Activated naive CD4-positive, alpha-beta T cell treated with anti-CD3 and anti-CD28 coated beads, Interleukin-2, amount 10 ng/mL, durations not matched to agents 7 days and 5 days (primary cell): ENCODE measurements at regions of chr17 and their contacts with region 1.

Region 1: DNA sequence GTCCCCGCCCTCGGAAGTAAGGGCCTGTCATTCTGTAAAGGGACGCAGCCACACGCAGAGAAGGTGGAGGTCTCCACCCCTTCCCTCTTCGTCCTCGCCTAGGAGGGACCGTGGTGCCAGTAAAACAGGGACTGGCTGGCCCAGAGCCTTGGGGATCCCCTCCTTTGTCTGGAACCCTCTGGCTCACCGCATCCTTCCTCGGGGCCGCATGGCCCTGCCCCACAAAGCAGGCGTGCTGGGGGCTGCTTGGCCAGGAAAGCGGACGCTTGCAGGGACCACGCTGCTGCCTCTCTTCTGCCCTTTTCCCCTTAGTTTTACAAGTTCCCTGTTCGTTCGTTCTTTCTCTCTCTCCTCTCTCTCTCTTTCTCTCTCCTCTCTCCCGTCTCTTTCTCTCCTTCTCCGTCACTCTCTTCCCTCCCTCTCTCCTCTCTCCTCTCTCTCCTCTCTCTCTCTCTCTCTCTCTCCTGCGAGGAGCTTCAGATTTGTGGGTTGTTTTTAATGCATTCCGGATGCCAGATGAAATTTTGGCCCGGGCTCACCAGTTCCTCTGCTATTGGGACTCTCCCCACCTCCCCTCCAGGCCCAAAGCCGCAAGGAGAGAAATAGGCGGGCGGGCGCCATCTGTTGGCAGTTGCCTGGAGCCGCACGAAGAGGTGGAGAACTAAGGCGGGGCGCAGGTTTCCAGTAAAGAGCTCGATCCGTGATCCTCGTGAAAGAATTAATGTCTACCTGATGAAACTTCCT is 35.1 kb upstream of the CDRT4 start:
- DNase-seq: peak; percentile 78
- H3K4me3 Mint-ChIP-seq: no peak overlapping the region
- H3K27ac Mint-ChIP-seq: peak overlapping the region; percentile 17
- H3K4me1 Mint-ChIP-seq: peaks cover 5% of the 10 kb centered on the region
- H3K27me3 Mint-ChIP-seq: peaks cover 4% of the 10 kb centered on the region

Region 2: DNA sequence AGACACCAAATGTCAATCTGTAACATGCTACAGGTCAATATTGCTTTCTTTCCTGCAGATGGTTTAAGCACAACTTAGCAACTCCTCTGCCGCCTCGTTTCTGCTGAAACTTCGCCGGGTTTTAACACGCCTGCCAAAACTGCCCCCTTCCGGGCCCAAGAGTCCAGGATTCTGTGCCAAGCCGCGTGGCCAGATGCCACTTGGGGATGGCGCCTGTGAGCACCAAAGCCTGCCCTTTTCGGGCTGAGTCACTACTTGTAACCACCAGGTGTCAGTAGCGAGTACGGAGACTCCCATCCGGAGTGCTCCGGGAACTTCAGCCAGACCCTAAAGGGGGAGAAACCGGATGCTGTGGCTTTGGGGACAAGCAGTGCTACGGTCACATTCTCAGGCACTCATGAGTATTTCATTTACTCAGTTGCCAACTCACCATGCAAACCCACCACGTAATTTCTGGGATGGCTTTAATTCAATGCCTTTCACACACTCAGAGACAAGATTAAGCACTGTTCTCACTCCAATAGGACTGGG is 245.2 kb before region 1 on chr17:
- CTCF ChIA-PET with region 1: interaction called, 62 read pairs
- DNase-seq: peak; percentile 72
- H3K4me3 Mint-ChIP-seq: no peak overlapping the region
- H3K27ac Mint-ChIP-seq: peak overlapping the region; percentile 49
- H3K4me1 Mint-ChIP-seq: peaks cover 20% of the 10 kb centered on the region
- H3K27me3 Mint-ChIP-seq: peaks cover 69% of the 10 kb centered on the region

Region 3: GRCh38 chr17:15371376-15372130 is 131.0 kb before region 1 on chr17:
- CTCF ChIA-PET with region 1: no interaction called
- DNase-seq: no peak
- H3K4me3 Mint-ChIP-seq: no peak overlapping the region
- H3K27ac Mint-ChIP-seq: no peak overlapping the region
- H3K4me1 Mint-ChIP-seq: no peaks in the 10 kb centered on the region
- H3K27me3 Mint-ChIP-seq: no peaks in the 10 kb centered on the region

Region 4: GRCh38 chr17:15436473-15437302 is 65.9 kb before region 1 on chr17:
- CTCF ChIA-PET with region 1: interaction called, 10 read pairs
- DNase-seq: peak; percentile 64
- H3K4me3 Mint-ChIP-seq: no peak overlapping the region
- H3K27ac Mint-ChIP-seq: peak overlapping the region; percentile 78
- H3K4me1 Mint-ChIP-seq: peaks cover 14% of the 10 kb centered on the region
- H3K27me3 Mint-ChIP-seq: no peaks in the 10 kb centered on the region

Region 5: GRCh38 chr17:15782866-15783265 is 280.3 kb after region 1 on chr17:
- CTCF ChIA-PET with region 1: no interaction called
- DNase-seq: peak; percentile 23
- H3K4me3 Mint-ChIP-seq: no peak overlapping the region
- H3K27ac Mint-ChIP-seq: no peak overlapping the region
- H3K4me1 Mint-ChIP-seq: peaks cover 2% of the 10 kb centered on the region
- H3K27me3 Mint-ChIP-seq: peaks cover 43% of the 10 kb centered on the region